ENCODE measurements at regions of chr1 and their contacts with region 1.

Region 1: DNA sequence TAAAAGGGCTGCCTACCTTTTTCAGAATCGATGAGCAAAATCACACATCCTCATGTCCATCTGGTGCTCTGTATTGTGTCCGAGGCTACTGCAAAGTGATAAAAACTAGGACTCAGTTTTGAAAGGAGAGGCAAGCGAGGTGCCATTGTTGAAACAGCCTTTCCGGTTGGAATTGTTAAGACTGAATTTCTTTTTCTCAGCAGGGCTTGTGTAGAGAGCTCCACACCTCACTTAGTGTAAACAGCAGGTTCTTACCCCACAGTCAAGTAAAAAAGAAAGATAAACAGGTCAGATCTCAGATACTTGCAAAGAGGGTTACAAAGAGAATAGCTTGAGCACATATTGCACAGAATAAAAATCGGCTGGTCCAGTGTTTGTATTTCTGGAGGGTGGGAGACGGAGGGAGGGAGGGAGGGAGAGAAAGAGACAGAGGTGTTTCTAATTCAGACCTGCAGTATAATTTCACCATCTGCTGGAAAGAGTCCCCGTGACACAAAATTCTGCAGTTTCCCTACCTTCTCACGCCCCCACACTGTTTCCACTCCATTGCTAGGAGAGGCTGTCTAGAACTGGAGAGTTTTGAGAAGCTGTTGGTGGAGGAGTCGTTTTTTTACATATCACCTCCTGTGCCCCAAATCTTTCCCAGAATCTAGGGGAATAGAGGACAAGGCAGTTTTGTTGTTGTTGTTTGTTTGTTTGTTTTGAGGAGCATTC is 82.5 kb downstream of the EDEM3 start:
- DNase-seq: no peak
- H3K4me3 ChIP-seq: no peak overlapping the region
- H3K27ac ChIP-seq: no peak overlapping the region
- H3K4me1 ChIP-seq: no peaks in the 10 kb centered on the region
- H3K27me3 ChIP-seq: no peaks in the 10 kb centered on the region
- CTCF ChIP-seq: no peak

Region 2: DNA sequence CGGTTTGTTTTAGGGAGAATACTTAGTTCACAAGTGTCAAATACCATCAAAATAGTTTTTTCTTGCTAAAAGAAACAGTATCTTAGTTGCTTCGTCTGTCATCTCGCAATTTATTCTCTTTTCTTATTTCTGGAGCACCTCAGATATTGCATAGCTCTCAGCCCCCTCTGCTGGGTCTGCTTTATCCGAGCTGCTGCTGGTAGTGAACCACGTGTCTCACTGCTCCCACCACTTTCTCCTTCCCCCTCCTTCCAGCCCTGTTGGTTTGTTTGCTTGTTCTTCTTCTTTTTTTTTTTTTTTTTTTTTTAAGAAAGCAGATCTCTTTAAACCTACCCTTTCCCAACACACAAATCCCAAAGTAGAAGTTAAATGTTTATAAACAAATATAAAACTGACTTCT is 88.3 kb before region 1 on chr1:
- intact Hi-C with region 1: loop called (anchors 10 kb)
- DNase-seq: no peak
- H3K4me3 ChIP-seq: no peak overlapping the region
- H3K27ac ChIP-seq: no peak overlapping the region
- H3K4me1 ChIP-seq: peaks cover 12% of the 10 kb centered on the region
- H3K27me3 ChIP-seq: no peaks in the 10 kb centered on the region
- CTCF ChIP-seq: no peak